ENCODE measurements at regions of chr1 and their contacts with region 1.

Region 1: DNA sequence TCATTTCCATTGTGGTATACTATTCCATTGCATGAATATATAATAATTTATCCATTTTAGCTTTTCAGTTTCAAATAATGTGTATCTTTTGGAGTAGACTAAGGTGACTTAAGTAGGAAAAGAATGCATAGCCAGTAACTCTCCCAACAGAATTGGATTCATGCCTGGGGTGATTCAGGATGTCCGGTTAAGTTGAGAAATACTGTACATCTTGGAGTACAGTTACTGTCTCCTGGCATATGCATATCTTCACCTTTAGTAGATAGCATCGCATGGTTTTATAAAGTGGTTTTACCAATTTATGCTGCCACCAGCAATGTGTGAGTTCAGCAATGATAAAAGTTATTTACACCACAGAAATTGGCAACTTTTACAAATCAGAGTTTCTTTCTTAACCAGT is 18.6 kb upstream of the SLC6A9 start:
- DNase-seq: no peak
- ATAC-seq: no peak
- H3K4me3 ChIP-seq: no peak overlapping the region
- H3K4me3 Mint-ChIP-seq: no peak overlapping the region
- H3K27ac ChIP-seq: no peak overlapping the region
- H3K27ac Mint-ChIP-seq: no peak overlapping the region
- H3K4me1 ChIP-seq: no peaks in the 10 kb centered on the region
- H3K4me1 Mint-ChIP-seq: no peaks in the 10 kb centered on the region
- H3K27me3 ChIP-seq: peaks cover 0 to 4% of the 10 kb centered on the region in 2 experiments
- H3K27me3 Mint-ChIP-seq: peaks cover 7% of the 10 kb centered on the region
- CTCF ChIP-seq: no peak

Region 2: GRCh38 chr1:43317817-43318471 is 731.9 kb before region 1 on chr1:
- CTCF ChIA-PET with region 1: no interaction called
- POLR2A ChIA-PET with region 1: no interaction called
- intact Hi-C with region 1: no loop called
- DNase-seq: no peak
- ATAC-seq: no peak
- H3K4me3 ChIP-seq: no peak overlapping the region
- H3K4me3 Mint-ChIP-seq: no peak overlapping the region
- H3K27ac ChIP-seq: no peak overlapping the region
- H3K27ac Mint-ChIP-seq: no peak overlapping the region
- H3K4me1 ChIP-seq: no peaks in the 10 kb centered on the region
- H3K4me1 Mint-ChIP-seq: no peaks in the 10 kb centered on the region
- H3K27me3 ChIP-seq: no peaks in the 10 kb centered on the region
- H3K27me3 Mint-ChIP-seq: no peaks in the 10 kb centered on the region
- CTCF ChIP-seq: no peak

Region 3: GRCh38 chr1:43881415-43881814 is 168.4 kb before region 1 on chr1:
- CTCF ChIA-PET with region 1: no interaction called
- POLR2A ChIA-PET with region 1: no interaction called
- intact Hi-C with region 1: no loop called
- DNase-seq: no peak
- ATAC-seq: no peak
- H3K4me3 ChIP-seq: no peak overlapping the region
- H3K4me3 Mint-ChIP-seq: no peak overlapping the region
- H3K27ac ChIP-seq: no peak overlapping the region
- H3K27ac Mint-ChIP-seq: no peak overlapping the region
- H3K4me1 ChIP-seq: peaks cover 2% of the 10 kb centered on the region
- H3K4me1 Mint-ChIP-seq: no peaks in the 10 kb centered on the region
- H3K27me3 ChIP-seq: no peaks in the 10 kb centered on the region
- H3K27me3 Mint-ChIP-seq: no peaks in the 10 kb centered on the region
- CTCF ChIP-seq: no peak

Region 4: GRCh38 chr1:44002606-44003157 is 47.2 kb before region 1 on chr1:
- CTCF ChIA-PET with region 1: interaction called, 9 read pairs
- POLR2A ChIA-PET with region 1: no interaction called
- intact Hi-C with region 1: loop called in 1 of 2 experiments (anchors 2 kb)
- DNase-seq: no peak
- ATAC-seq: no peak
- H3K4me3 ChIP-seq: no peak overlapping the region
- H3K4me3 Mint-ChIP-seq: no peak overlapping the region
- H3K27ac ChIP-seq: no peak overlapping the region
- H3K27ac Mint-ChIP-seq: no peak overlapping the region
- H3K4me1 ChIP-seq: no peaks in the 10 kb centered on the region
- H3K4me1 Mint-ChIP-seq: no peaks in the 10 kb centered on the region
- H3K27me3 ChIP-seq: no peaks in the 10 kb centered on the region
- H3K27me3 Mint-ChIP-seq: no peaks in the 10 kb centered on the region
- CTCF ChIP-seq: no peak

Measured in CD4-positive, alpha-beta T cell (primary cell).